T-cell (primary cell): ENCODE measurements at regions of chr12 and their contacts with region 1.

Region 1: GRCh38 chr12:27785882-27786570 is 6.0 kb upstream of the MANSC4 start:
- DNase-seq: no peak
- ATAC-seq: no peak
- H3K4me3 ChIP-seq: no peak overlapping the region
- H3K4me3 Mint-ChIP-seq: no peak overlapping the region
- H3K27ac ChIP-seq: no peak overlapping the region
- H3K27ac Mint-ChIP-seq: no peak overlapping the region
- H3K4me1 ChIP-seq: peaks cover 8 to 15% of the 10 kb centered on the region in 2 experiments
- H3K4me1 Mint-ChIP-seq: peaks cover 52 to 64% (median 52%) of the 10 kb centered on the region in 3 donors
- H3K27me3 ChIP-seq: no peaks in the 10 kb centered on the region
- H3K27me3 Mint-ChIP-seq: no peaks in the 10 kb centered on the region

Region 2: DNA sequence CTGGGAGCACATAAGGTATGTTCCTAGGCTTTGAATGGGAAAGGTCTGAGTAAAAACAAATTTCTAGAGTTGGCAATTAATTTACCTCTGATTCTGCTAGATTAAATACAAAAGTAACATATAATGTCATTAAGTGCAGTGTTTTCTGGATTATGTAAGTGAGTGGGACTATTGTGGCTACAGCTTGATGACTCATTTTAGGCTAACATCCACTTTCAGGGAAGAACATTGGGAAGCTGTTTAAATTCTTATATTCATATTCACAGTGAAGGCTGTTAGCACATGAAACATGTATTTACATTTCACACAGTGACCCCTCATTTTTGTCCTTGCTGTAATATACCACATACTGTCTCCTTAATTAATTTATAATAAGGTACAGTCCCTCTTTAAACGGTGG is 466.6 kb before region 1 on chr12:
- CTCF ChIA-PET with region 1: no interaction called
- POLR2A ChIA-PET with region 1: no interaction called
- DNase-seq: no peak
- ATAC-seq: no peak
- H3K4me3 ChIP-seq: no peak overlapping the region
- H3K4me3 Mint-ChIP-seq: no peak overlapping the region
- H3K27ac ChIP-seq: no peak overlapping the region
- H3K27ac Mint-ChIP-seq: no peak overlapping the region
- H3K4me1 ChIP-seq: no peaks in the 10 kb centered on the region
- H3K4me1 Mint-ChIP-seq: no peaks in the 10 kb centered on the region
- H3K27me3 ChIP-seq: no peaks in the 10 kb centered on the region
- H3K27me3 Mint-ChIP-seq: no peaks in the 10 kb centered on the region

Region 3: DNA sequence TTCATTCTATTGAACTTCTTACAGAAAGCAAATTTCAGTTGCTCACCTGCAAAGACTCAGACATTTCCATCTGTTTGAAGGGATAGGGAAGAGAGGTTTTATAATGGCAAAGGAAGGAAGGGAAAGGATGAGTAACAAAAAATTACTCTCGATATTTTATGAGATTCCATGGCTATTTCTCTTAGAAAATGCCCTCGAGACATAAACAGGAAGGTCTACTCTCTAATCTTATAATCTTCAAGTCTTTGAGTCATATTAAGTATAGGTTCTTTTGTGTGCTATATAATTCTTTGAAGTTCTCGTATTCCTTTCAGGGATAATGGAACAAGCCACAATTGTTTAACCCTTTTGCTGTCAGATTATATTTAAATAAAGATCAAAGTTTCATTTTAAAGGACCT is 13.4 kb before region 1 on chr12:
- CTCF ChIA-PET with region 1: no interaction called
- POLR2A ChIA-PET with region 1: interaction called in 1 of 2 experiments, 14 read pairs
- DNase-seq: no peak
- ATAC-seq: no peak
- H3K4me3 ChIP-seq: no peak overlapping the region
- H3K4me3 Mint-ChIP-seq: no peak overlapping the region
- H3K27ac ChIP-seq: no peak overlapping the region
- H3K27ac Mint-ChIP-seq: no peak overlapping the region
- H3K4me1 ChIP-seq: no peaks in the 10 kb centered on the region
- H3K4me1 Mint-ChIP-seq: peaks cover 0 to 4% (median 3%) of the 10 kb centered on the region in 3 donors
- H3K27me3 ChIP-seq: no peaks in the 10 kb centered on the region
- H3K27me3 Mint-ChIP-seq: no peaks in the 10 kb centered on the region

Region 4: DNA sequence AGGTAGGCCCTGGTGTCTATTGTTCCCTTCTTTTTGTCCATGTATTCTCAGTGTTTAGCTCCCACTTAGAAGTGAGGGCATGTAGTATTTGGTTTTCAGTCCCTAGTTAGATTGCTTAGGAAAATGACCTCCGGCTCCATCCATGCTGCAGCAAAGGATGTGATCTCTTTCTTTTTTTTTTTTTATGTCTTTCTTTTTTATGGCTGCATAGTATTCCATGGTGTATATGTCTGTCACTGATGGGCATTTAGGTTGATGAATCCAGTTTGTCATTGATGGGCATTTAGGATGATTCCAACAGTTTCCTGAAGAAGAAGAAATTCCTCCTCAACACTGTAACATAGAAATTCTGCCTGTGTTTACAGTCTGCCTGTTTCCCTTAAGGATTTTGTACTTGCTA is 635.3 kb after region 1 on chr12:
- CTCF ChIA-PET with region 1: interaction called in 1 of 2 experiments, 11 read pairs
- POLR2A ChIA-PET with region 1: no interaction called
- DNase-seq: no peak
- ATAC-seq: no peak
- H3K4me3 ChIP-seq: no peak overlapping the region
- H3K4me3 Mint-ChIP-seq: no peak overlapping the region
- H3K27ac ChIP-seq: no peak overlapping the region
- H3K27ac Mint-ChIP-seq: no peak overlapping the region
- H3K4me1 ChIP-seq: no peaks in the 10 kb centered on the region
- H3K4me1 Mint-ChIP-seq: peaks cover 5 to 10% (median 8%) of the 10 kb centered on the region in 3 donors
- H3K27me3 ChIP-seq: no peaks in the 10 kb centered on the region
- H3K27me3 Mint-ChIP-seq: no peaks in the 10 kb centered on the region